Naive thymus-derived CD4-positive, alpha-beta T cell (primary cell): ENCODE measurements at regions of chr3 and their contacts with region 1.

Region 1: GRCh38 chr3:129278439-129278970 is at the start of gene HMCES:
- DNase-seq: peak; percentile 92 to 98 (median 95)
- ATAC-seq: peak; percentile 98
- H3K4me3 ChIP-seq: peak within 1 kb of the TSS; percentile 99
- H3K4me3 Mint-ChIP-seq: peak within 1 kb of the TSS; percentile 95 to 99 (median 98)
- H3K27ac ChIP-seq: peak within 1 kb of the TSS; percentile 99
- H3K27ac Mint-ChIP-seq: peak within 1 kb of the TSS; percentile 89 to 100 (median 98)
- H3K4me1 ChIP-seq: peaks cover 14 to 29% of the 10 kb centered on the region in 2 donors
- H3K4me1 Mint-ChIP-seq: peaks cover 21 to 50% (median 37%) of the 10 kb centered on the region in 7 donors
- H3K27me3 ChIP-seq: no peaks in the 10 kb centered on the region
- H3K27me3 Mint-ChIP-seq: no peaks in the 10 kb centered on the region
- total RNA-seq, gene HMCES: 45.7 to 56.4 (median 52.5) TPM

Region 2: DNA sequence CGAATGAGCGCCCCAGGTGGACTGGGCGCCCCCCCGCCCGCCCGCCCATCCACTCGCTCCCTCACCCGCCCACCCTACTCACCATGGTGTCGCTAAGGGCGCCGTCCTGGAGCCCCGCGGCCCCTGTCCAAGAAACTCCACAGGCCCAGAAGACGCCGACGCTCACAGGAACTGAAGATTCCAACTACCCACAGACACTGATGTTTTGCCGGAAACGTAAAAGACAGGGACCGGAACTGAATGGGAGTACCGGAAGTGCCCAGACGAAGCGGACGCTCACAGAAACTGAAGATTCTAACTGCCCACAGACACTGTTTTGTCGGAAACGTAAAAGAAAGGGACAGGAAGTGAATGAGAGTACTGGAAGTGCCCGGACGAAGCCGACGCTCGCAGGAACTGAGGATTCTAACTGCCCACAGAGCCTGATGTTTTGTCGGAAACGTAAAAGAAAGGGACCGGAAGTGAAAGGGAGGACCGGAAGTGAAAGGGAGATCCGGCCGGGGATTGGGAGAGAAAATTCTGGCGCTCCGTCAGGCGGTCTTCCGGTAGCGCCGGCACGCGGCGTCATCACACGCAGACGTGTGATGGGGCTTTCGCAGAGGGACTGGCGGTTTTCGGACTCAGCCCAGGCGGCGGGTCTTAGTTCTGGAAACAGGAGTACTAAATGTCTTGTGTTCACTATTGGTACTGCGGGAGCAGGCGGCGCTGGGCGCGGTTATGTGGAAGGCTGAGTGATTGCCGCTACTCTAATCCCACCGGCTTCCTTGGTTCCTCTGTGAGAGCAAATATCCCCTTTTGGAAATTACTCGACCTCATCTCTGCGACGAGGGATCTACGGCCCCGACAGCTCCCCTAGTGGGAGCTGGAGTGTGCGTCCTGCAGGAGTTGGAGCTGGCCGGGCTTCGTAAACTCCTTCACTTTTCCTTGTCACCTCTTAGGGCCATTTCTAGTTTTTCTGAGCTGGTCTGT is 117.3 kb before region 1 on chr3 and contains the start of gene ISY1:
- CTCF ChIA-PET with region 1: no interaction called
- POLR2A ChIA-PET with region 1: interaction called, 4 read pairs
- intact Hi-C with region 1: loop called (anchors 1 kb)
- DNase-seq: peak; percentile 68 to 92 (median 89)
- ATAC-seq: peak; percentile 90
- H3K4me3 ChIP-seq: peak within 1 kb of the TSS; percentile 94
- H3K4me3 Mint-ChIP-seq: peak within 1 kb of the TSS; percentile 84 to 100 (median 98)
- H3K27ac ChIP-seq: peak within 1 kb of the TSS; percentile 98
- H3K27ac Mint-ChIP-seq: peak within 1 kb of the TSS; percentile 97 to 100 (median 99)
- H3K4me1 ChIP-seq: peaks cover 22 to 24% of the 10 kb centered on the region in 2 donors
- H3K4me1 Mint-ChIP-seq: peaks cover 18 to 53% (median 40%) of the 10 kb centered on the region in 7 donors
- H3K27me3 ChIP-seq: no peaks in the 10 kb centered on the region
- H3K27me3 Mint-ChIP-seq: peaks cover 0 to 4% (median 0%) of the 10 kb centered on the region in 5 donors
- total RNA-seq, gene ISY1: 27.6 to 65.1 (median 37.4) TPM

Region 3: GRCh38 chr3:129289201-129289921 is 10.9 kb after region 1 on chr3:
- CTCF ChIA-PET with region 1: no interaction called
- POLR2A ChIA-PET with region 1: interaction called, 10 read pairs
- intact Hi-C with region 1: no loop called
- DNase-seq: no peak
- ATAC-seq: no peak
- H3K4me3 ChIP-seq: no peak overlapping the region
- H3K4me3 Mint-ChIP-seq: no peak overlapping the region
- H3K27ac ChIP-seq: no peak overlapping the region
- H3K27ac Mint-ChIP-seq: peak overlapping the region in 3 of 9 donors; percentile 43 to 84 (median 47)
- H3K4me1 ChIP-seq: no peaks in the 10 kb centered on the region
- H3K4me1 Mint-ChIP-seq: peaks cover 13 to 37% (median 23%) of the 10 kb centered on the region in 7 donors
- H3K27me3 ChIP-seq: no peaks in the 10 kb centered on the region
- H3K27me3 Mint-ChIP-seq: no peaks in the 10 kb centered on the region

Region 4: DNA sequence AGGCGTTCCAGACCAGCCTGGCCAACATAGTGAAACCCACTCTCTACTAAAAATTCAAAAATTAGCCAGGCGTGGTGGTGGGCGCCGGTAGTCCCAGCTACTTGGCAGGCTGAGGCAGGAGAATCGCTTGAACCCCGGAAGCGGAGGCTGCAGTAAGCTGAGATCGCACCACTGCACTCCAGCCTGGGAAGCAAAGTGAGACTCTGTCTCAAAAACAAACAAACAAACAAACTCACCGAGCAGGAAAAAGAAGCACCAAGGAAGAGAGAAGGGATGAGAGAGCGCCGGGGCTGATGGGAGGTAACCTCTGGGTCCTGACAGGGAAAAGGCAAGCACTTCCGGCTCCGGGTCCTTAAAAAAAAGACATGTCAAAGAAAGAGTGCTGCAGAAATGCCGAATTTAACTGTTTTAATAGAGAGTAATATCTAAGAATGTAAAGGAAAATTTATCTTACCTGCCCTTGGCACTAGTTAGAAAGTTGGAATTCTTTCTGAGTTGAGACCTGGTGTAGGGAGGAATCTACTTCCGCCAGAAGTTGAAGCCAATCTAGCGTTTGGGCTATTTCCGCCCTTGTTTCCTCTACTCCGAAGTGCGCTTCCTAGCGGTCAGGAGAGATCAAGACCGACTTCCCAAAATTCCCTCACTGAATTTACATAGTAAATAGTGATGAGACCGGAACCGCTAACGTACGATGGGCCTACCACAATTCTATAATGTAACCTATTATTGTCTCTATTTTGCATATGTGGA is 120.8 kb after region 1 on chr3:
- CTCF ChIA-PET with region 1: no interaction called
- POLR2A ChIA-PET with region 1: no interaction called
- intact Hi-C with region 1: loop called (anchors 2 kb)
- DNase-seq: peak; percentile 34 to 89 (median 81)
- ATAC-seq: peak; percentile 91
- H3K4me3 ChIP-seq: peak overlapping the region; percentile 70
- H3K4me3 Mint-ChIP-seq: peak overlapping the region; percentile 89 to 100 (median 97)
- H3K27ac ChIP-seq: peak overlapping the region; percentile 88
- H3K27ac Mint-ChIP-seq: peak overlapping the region; percentile 94 to 100 (median 98)
- H3K4me1 ChIP-seq: peaks cover 10 to 13% of the 10 kb centered on the region in 2 donors
- H3K4me1 Mint-ChIP-seq: peaks cover 23 to 47% (median 37%) of the 10 kb centered on the region in 7 donors
- H3K27me3 ChIP-seq: no peaks in the 10 kb centered on the region
- H3K27me3 Mint-ChIP-seq: no peaks in the 10 kb centered on the region

Region 5: GRCh38 chr3:129428376-129429079 is 150.0 kb after region 1 on chr3 and contains the start of gene EFCAB12:
- CTCF ChIA-PET with region 1: no interaction called
- POLR2A ChIA-PET with region 1: no interaction called
- intact Hi-C with region 1: loop called in 1 of 2 experiments (anchors 2 kb)
- DNase-seq: peak; percentile 78 to 90 (median 86)
- ATAC-seq: peak; percentile 98
- H3K4me3 ChIP-seq: peak within 1 kb of the TSS; percentile 63
- H3K4me3 Mint-ChIP-seq: peak within 1 kb of the TSS; percentile 78 to 97 (median 89)
- H3K27ac ChIP-seq: peak within 1 kb of the TSS; percentile 65
- H3K27ac Mint-ChIP-seq: peak within 1 kb of the TSS; percentile 60 to 91 (median 75)
- H3K4me1 ChIP-seq: peaks cover 0 to 13% of the 10 kb centered on the region in 2 donors
- H3K4me1 Mint-ChIP-seq: peaks cover 17 to 29% (median 22%) of the 10 kb centered on the region in 7 donors
- H3K27me3 ChIP-seq: no peaks in the 10 kb centered on the region
- H3K27me3 Mint-ChIP-seq: peaks cover 0 to 13% (median 0%) of the 10 kb centered on the region in 5 donors
- total RNA-seq, gene EFCAB12: 1.5 to 2.7 (median 2.3) TPM